ENCODE measurements at regions of chr5 and their contacts with region 1.

Region 1: DNA sequence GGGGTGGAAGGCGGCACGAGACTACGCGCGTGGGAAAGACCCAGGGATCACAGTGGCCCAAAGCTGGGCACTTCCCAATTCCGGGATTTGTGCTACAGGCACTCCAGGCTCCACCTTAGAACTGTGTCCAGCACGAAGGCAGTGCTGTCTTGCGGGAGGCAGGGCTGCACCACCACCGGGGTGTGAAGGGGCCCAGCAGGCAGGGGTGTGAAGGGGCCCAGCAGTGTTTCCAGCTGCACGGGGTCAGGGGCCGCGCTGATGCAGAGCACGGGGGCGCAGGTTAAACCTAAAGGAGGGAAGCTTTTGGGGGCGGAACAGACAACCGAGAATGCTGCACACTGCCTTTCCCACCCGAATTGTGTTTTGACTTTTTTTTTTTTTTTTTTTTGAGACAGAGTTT is 1.1 kb upstream of the PDCD6 start:
- DNase-seq: no peak
- H3K4me3 ChIP-seq: peak overlapping the region; percentile 63; the same call in 1 of the 2 replicates
- H3K4me3 Mint-ChIP-seq: peak overlapping the region; percentile 79
- H3K27ac Mint-ChIP-seq: peak overlapping the region; percentile 89
- H3K4me1 ChIP-seq: no peaks in the 10 kb centered on the region
- H3K4me1 Mint-ChIP-seq: peaks cover 10% of the 10 kb centered on the region
- H3K27me3 ChIP-seq: no peaks in the 10 kb centered on the region
- H3K27me3 Mint-ChIP-seq: no peaks in the 10 kb centered on the region
- CTCF ChIP-seq: no peak

Region 2: GRCh38 chr5:21654-22233 is 248.6 kb before region 1 on chr5:
- CTCF ChIA-PET with region 1: no interaction called
- POLR2A ChIA-PET with region 1: no interaction called
- intact Hi-C with region 1: no loop called
- DNase-seq: no peak
- H3K4me3 ChIP-seq: no peak overlapping the region
- H3K4me3 Mint-ChIP-seq: no peak overlapping the region
- H3K27ac Mint-ChIP-seq: no peak overlapping the region
- H3K4me1 ChIP-seq: no peaks in the 10 kb centered on the region
- H3K4me1 Mint-ChIP-seq: no peaks in the 10 kb centered on the region
- H3K27me3 ChIP-seq: no peaks in the 10 kb centered on the region
- H3K27me3 Mint-ChIP-seq: peaks cover 20% of the 10 kb centered on the region
- CTCF ChIP-seq: peak; percentile 28 to 44

Region 3: DNA sequence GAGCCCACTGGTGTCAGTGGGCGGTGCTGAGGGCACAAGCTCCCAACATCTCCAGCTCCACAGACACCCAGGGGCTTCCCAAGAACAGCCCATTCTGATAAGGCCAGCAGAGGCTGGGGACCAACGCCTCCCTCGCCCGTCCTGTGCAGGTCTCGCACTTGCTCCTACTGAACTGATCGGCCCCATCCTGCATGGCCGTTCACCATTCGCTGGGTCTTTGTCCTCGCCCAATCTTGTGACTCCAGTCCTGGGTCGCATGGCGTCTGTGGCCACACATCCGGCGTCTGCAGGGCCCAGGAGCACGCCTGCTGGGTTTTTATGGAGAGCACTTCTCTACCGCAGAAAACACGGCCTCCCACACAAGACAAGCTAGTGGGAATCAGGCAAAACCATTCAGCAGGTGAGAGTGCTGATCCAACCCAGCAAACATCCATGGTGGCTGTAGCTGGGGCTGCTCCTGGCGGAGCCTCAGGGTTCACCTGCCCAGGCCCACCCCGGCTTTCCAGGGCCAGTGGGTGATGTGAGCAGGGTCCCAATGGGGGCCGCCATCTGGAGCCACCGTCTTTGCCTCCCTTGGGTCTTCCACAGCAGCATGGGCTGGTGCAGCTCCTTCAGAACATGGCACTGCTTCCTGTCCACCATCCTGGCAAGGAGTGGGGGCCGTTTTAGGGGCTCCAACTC is 71.7 kb before region 1 on chr5:
- CTCF ChIA-PET with region 1: no interaction called
- POLR2A ChIA-PET with region 1: interaction called, 10 read pairs
- intact Hi-C with region 1: no loop called
- DNase-seq: no peak
- H3K4me3 ChIP-seq: no peak overlapping the region
- H3K4me3 Mint-ChIP-seq: no peak overlapping the region
- H3K27ac Mint-ChIP-seq: no peak overlapping the region
- H3K4me1 ChIP-seq: no peaks in the 10 kb centered on the region
- H3K4me1 Mint-ChIP-seq: no peaks in the 10 kb centered on the region
- H3K27me3 ChIP-seq: no peaks in the 10 kb centered on the region
- H3K27me3 Mint-ChIP-seq: no peaks in the 10 kb centered on the region
- CTCF ChIP-seq: no peak

Region 4: DNA sequence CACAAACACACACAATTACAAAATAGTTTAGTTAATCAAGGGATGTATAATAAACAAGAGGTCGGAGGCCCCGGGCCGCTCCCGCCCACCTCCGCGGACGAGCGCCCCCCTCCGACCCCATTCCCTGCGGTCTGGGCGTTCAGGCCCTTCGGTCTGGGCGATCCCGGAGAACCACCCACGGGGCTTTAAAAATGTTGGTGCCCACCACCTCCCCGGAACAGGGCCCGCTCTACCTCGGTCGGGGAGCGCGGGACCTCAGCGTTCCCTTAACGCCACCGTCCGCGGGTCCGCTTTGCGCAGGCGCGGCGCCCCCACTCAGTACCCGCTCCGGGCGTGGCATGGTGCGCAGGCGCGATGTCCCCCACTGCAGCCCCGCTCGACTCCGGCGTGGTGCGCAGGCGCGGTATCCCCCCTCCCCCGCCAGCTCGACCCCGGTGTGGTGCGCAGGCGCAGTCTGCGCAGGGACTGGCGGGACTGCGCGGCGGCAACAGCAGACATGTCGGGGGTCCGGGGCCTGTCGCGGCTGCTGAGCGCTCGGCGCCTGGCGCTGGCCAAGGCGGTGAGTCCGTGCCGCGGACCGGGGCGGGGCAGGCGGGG is 52.4 kb before region 1 on chr5 and contains the starts of genes CCDC127 and SDHA:
- CTCF ChIA-PET with region 1: interaction called, 5 read pairs
- POLR2A ChIA-PET with region 1: interaction called, 19 read pairs
- intact Hi-C with region 1: loop called (anchors 2 kb)
- DNase-seq: peak; percentile 94 to 97
- H3K4me3 ChIP-seq: peak within 1 kb of the TSS; percentile 99
- H3K4me3 Mint-ChIP-seq: peak within 1 kb of the TSS; percentile 84
- H3K27ac Mint-ChIP-seq: peak within 1 kb of the TSS; percentile 75
- H3K4me1 ChIP-seq: peaks cover 9% of the 10 kb centered on the region; the same call in 1 of the 2 replicates
- H3K4me1 Mint-ChIP-seq: peaks cover 7% of the 10 kb centered on the region
- H3K27me3 ChIP-seq: no peaks in the 10 kb centered on the region
- H3K27me3 Mint-ChIP-seq: no peaks in the 10 kb centered on the region
- CTCF ChIP-seq: peak; percentile 54 to 56
- total RNA-seq, gene CCDC127: 10.5 TPM in 2 replicates
- total RNA-seq, gene SDHA: 140 and 157 TPM in 2 replicates

Region 5: GRCh38 chr5:257148-257547 is 13.2 kb before region 1 on chr5:
- CTCF ChIA-PET with region 1: no interaction called
- POLR2A ChIA-PET with region 1: no interaction called
- intact Hi-C with region 1: no loop called
- DNase-seq: no peak
- H3K4me3 ChIP-seq: no peak overlapping the region
- H3K4me3 Mint-ChIP-seq: no peak overlapping the region
- H3K27ac Mint-ChIP-seq: no peak overlapping the region
- H3K4me1 ChIP-seq: no peaks in the 10 kb centered on the region
- H3K4me1 Mint-ChIP-seq: no peaks in the 10 kb centered on the region
- H3K27me3 ChIP-seq: no peaks in the 10 kb centered on the region
- H3K27me3 Mint-ChIP-seq: no peaks in the 10 kb centered on the region
- CTCF ChIP-seq: no peak

Region 6: GRCh38 chr5:350355-350754 is 80.0 kb after region 1 on chr5:
- CTCF ChIA-PET with region 1: no interaction called
- POLR2A ChIA-PET with region 1: no interaction called
- intact Hi-C with region 1: no loop called
- DNase-seq: no peak
- H3K4me3 ChIP-seq: no peak overlapping the region
- H3K4me3 Mint-ChIP-seq: no peak overlapping the region
- H3K27ac Mint-ChIP-seq: no peak overlapping the region
- H3K4me1 ChIP-seq: no peaks in the 10 kb centered on the region
- H3K4me1 Mint-ChIP-seq: no peaks in the 10 kb centered on the region
- H3K27me3 ChIP-seq: no peaks in the 10 kb centered on the region
- H3K27me3 Mint-ChIP-seq: no peaks in the 10 kb centered on the region
- CTCF ChIP-seq: peak in 1 of 2 experiments; percentile 46

Region 7: GRCh38 chr5:368183-369084 is 98.1 kb after region 1 on chr5:
- CTCF ChIA-PET with region 1: no interaction called
- POLR2A ChIA-PET with region 1: no interaction called
- intact Hi-C with region 1: no loop called
- DNase-seq: peak in 1 of 2 experiments; percentile 20
- H3K4me3 ChIP-seq: no peak overlapping the region
- H3K4me3 Mint-ChIP-seq: no peak overlapping the region
- H3K27ac Mint-ChIP-seq: no peak overlapping the region
- H3K4me1 ChIP-seq: peaks cover 6% of the 10 kb centered on the region; the same call in 1 of the 2 replicates
- H3K4me1 Mint-ChIP-seq: no peaks in the 10 kb centered on the region
- H3K27me3 ChIP-seq: no peaks in the 10 kb centered on the region
- H3K27me3 Mint-ChIP-seq: peaks cover 7% of the 10 kb centered on the region
- CTCF ChIP-seq: no peak